ENCODE measurements at regions of chr3 and their contacts with region 1.

Region 1: DNA sequence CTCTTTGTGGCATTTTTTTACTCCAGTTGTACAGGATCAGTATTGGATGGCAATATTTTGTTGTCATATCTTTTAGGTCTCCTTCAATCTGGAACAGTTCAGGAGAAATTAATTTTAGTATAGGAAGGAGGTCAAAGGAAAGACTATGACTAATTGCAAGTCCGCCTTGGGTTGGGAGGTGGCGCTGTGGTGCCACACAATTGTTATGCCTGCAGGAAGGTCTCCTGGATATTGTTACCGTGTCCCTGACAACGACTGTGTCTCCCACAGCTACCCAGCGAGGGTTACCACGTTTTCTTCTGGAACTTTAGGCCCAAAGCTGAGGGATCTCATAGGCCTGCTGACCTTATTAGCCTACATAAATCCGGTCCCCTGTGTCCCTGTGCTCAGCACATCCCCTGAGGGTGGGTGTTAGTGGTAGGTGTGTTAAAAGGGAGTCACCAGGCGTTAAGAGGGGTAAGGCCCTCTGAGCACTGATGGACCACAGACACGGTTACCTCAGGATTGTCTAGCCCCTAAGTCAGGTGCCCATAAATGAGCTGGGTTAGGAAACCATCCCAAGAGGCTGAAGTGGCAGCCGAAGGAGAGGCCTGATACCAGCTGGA is 31.5 kb downstream of the KCNAB1 start:
- DNase-seq: peak; percentile 73
- H3K4me3 Mint-ChIP-seq: no peak overlapping the region
- H3K27ac Mint-ChIP-seq: no peak overlapping the region
- H3K4me1 Mint-ChIP-seq: peaks cover 3% of the 10 kb centered on the region
- H3K27me3 Mint-ChIP-seq: no peaks in the 10 kb centered on the region

Region 2: GRCh38 chr3:156382458-156383346 is 230.8 kb after region 1 on chr3:
- CTCF ChIA-PET with region 1: interaction called, 39 read pairs
- POLR2A ChIA-PET with region 1: no interaction called
- intact Hi-C with region 1: loop called (anchors 1 kb)
- DNase-seq: peak; percentile 19
- H3K4me3 Mint-ChIP-seq: no peak overlapping the region
- H3K27ac Mint-ChIP-seq: no peak overlapping the region
- H3K4me1 Mint-ChIP-seq: no peaks in the 10 kb centered on the region
- H3K27me3 Mint-ChIP-seq: no peaks in the 10 kb centered on the region

Region 3: DNA sequence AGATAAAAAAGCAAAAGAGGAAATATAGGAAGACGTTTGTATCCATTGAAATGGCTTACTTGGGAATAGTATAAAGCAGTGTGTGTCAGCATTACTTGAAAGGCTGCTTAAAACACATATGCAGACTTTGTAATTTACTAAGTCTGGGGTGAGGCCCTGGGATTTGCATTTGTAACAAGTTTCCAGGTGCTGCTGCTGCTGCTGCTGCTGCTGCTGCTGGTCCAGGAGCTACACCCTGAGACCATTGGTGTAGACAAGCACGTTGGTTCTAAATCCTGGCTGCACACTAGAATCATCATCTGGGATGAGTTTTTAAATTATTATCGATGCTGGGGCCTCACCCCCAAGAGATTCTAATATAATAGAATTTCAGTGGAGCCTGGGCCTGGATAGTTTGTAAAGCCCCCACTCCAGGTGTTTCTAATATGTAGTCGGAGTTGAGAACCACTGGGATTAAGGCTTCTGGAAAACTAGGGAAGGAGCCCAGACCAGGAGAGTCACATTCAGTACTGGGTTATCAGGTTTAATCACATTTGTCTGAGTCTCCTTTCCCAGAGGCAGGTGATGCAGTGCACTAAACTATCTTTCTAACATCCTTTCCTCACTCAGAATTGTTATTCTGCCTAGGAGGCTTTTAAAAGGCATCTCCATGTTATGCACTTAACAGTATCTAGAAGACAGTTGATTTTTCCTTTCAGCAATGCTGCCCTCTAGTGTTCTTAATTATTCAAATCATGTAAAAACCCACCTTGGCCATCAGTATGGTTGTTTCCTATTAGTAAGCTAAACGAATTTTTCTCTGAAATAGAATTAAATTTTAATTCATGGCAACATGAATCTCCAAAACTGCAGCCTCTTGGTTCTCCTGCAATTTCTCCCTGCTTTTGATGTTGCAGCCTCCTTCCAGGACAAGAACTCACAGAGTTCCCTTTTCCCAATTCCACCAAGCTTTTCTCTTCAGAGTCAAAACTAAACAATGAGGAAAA is 357.6 kb after region 1 on chr3:
- CTCF ChIA-PET with region 1: interaction called, 161 read pairs
- POLR2A ChIA-PET with region 1: no interaction called
- intact Hi-C with region 1: loop called (anchors 1 kb)
- DNase-seq: no peak
- H3K4me3 Mint-ChIP-seq: no peak overlapping the region
- H3K27ac Mint-ChIP-seq: no peak overlapping the region
- H3K4me1 Mint-ChIP-seq: peaks cover 13% of the 10 kb centered on the region
- H3K27me3 Mint-ChIP-seq: peaks cover 1% of the 10 kb centered on the region

Region 4: DNA sequence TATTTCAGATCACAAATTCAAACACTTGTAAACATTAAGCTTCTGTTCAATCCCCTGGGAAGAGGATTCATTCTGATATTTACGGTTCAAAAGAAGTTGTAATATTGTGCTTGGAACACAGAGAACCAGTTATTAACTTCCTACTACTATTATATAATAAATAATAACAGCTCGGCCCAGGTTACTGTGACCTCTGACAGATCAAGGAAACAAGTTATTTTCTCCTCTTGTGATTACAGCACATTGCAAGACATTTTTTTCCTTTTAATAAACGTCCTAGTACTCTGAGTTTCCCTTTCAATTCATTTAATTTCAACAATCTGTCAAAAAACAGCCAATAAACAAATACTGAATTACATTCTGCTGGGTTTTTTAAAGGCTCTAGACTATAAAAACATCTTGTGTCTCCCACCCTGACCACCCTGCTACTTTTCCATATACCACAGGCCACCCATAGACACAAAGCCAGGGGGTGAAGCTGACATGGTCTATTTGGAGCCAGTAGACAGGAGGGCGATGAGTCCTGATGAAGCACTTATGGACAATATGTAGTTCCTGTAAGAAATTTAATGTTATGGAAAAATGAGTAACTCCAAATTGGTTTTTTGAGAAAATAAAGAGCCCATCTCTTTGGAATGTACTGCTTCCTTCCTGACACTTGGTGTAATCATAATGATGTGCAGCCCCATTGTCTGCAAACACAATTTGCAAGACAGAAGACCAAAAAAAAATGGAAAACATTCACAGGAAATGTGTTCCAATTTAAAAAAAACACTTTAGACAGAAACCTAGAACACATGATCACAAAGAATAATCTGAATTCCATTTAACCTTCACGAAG is 391.0 kb after region 1 on chr3:
- CTCF ChIA-PET with region 1: interaction called, 16 read pairs
- POLR2A ChIA-PET with region 1: no interaction called
- intact Hi-C with region 1: loop called (anchors 1 kb)
- DNase-seq: no peak
- H3K4me3 Mint-ChIP-seq: no peak overlapping the region
- H3K27ac Mint-ChIP-seq: no peak overlapping the region
- H3K4me1 Mint-ChIP-seq: peaks cover 14% of the 10 kb centered on the region
- H3K27me3 Mint-ChIP-seq: no peaks in the 10 kb centered on the region

Measured in activated CD4-positive, alpha-beta memory T cell treated with anti-CD3 and anti-CD28 coated beads for 36 hours (primary cell).